ENCODE measurements at regions of chr13 and their contacts with region 1.

Region 1: DNA sequence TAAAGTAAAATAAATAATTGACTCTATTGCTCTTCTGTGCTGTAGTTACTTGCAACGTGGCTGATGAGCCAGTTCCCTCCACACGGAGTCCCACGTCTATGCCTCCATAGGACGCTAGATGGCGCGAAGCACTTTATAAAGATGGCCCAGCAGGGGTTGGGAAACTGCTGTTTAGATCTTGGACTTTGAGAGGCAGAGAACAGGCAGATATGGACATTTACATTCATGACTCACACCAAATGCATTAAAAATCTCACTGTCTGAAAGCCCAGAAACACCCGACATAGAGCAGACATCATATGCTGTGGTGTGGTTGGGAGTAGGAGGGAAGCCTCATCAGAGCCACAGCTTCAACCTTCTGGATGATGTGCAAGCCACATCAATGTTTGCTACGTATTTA is 643.1 kb upstream of the ARGLU1 start:
- DNase-seq: peak; percentile 35 to 60 (median 43)
- ATAC-seq: peak; percentile 91
- H3K4me3 ChIP-seq: no peak overlapping the region
- H3K27ac ChIP-seq: no peak overlapping the region
- H3K4me1 ChIP-seq: no peaks in the 10 kb centered on the region
- H3K27me3 ChIP-seq: no peaks in the 10 kb centered on the region
- CTCF ChIP-seq: peak; percentile 70 to 82 (median 73)
- EP300 ChIP-seq: no peak
- POLR2A ChIP-seq: no peak
- RAD21 ChIP-seq: peak; percentile 43 to 63

Region 2: GRCh38 chr13:107650081-107650701 is 439.1 kb after region 1 on chr13:
- CTCF ChIA-PET with region 1: no interaction called
- POLR2A ChIA-PET with region 1: no interaction called
- in situ Hi-C with region 1: no loop called
- intact Hi-C with region 1: loop called (anchors 2 kb)
- DNase-seq: peak; percentile 7 to 40 (median 20)
- ATAC-seq: peak; percentile 67; the same call in 2 of the 3 replicates
- H3K4me3 ChIP-seq: no peak overlapping the region
- H3K27ac ChIP-seq: no peak overlapping the region
- H3K4me1 ChIP-seq: no peaks in the 10 kb centered on the region
- H3K27me3 ChIP-seq: no peaks in the 10 kb centered on the region
- CTCF ChIP-seq: peak; percentile 56 to 96 (median 60)
- EP300 ChIP-seq: no peak
- POLR2A ChIP-seq: no peak
- RAD21 ChIP-seq: peak in 1 of 2 experiments; percentile 23; a peak in 1 of 4 replicates

Region 3: GRCh38 chr13:108155185-108156106 is 944.4 kb after region 1 on chr13:
- CTCF ChIA-PET with region 1: no interaction called
- POLR2A ChIA-PET with region 1: no interaction called
- in situ Hi-C with region 1: loop called (anchors 5 kb)
- intact Hi-C with region 1: loop called (anchors 1 kb)
- DNase-seq: peak; percentile 21 to 32 (median 30)
- ATAC-seq: no peak
- H3K4me3 ChIP-seq: no peak overlapping the region
- H3K27ac ChIP-seq: no peak overlapping the region
- H3K4me1 ChIP-seq: no peaks in the 10 kb centered on the region
- H3K27me3 ChIP-seq: no peaks in the 10 kb centered on the region
- CTCF ChIP-seq: peak; percentile 30 to 60 (median 52); a peak in 5 of 6 replicates
- EP300 ChIP-seq: no peak
- POLR2A ChIP-seq: no peak
- RAD21 ChIP-seq: peak; percentile 29 to 40; a peak in 3 of 4 replicates

Measured in K562 (cell line).